ENCODE measurements at regions of chr14 and their contacts with region 1.

Region 1: DNA sequence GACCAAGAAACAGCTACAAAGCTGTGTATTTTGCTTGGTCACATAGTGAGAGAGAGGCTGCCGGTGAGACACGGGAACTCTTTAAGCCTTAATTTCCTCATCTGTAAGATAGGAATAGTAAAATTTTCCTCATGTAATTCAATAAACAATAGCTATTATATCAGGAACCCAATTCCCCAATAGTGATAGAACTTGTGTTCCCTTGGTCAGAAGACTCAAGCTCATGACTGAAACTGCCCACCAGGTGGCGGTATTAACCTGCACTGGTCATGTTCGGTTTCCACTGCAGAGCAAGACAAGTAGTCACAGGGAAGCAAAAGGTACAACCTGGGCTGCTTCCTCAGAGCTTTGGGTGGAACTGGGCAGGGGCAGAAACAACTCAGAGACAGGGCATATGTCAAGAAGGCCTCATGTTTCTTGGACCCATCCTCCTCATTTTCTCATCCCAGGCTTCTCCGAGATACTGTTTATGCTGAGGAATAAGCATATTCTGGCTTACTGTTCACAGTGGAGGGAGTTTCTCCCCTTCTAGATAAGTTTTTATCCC is 4.2 kb upstream of the AJUBA start:
- DNase-seq: peak; percentile 95
- ATAC-seq: peak; percentile 57
- H3K4me3 Mint-ChIP-seq: no peak overlapping the region
- H3K27ac Mint-ChIP-seq: no peak overlapping the region
- H3K4me1 Mint-ChIP-seq: peaks cover 5% of the 10 kb centered on the region
- H3K27me3 Mint-ChIP-seq: no peaks in the 10 kb centered on the region; the same call in 1 of the 2 replicates
- CTCF ChIP-seq: peak; percentile 83

Region 2: DNA sequence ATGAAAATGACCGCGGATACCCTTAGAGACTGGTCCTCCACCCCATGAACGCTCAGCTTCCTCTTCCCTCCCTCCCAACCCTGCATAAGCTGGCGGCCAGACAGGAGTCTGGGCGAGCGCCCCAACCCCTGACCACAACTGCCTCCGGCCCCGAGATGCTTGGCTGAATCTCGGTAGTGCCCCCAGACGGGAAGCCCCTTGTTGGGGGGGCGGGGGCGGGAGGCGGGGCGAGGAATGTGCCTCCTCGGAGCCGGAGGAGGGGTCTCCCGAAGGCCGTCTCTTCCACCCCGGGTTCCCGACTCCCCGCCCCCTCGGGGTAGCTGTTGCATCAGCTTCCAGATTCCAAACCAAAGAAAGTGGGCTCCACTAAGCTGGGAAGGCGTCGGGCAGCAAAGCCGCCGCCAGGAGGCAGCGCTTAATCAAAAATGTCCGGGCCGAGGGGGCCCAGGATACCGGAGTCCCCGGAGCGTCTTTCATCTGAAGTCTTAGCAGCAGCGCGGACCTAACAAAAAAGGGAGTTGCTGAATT is 163.9 kb before region 1 on chr14:
- CTCF ChIA-PET with region 1: interaction called, 13 read pairs
- POLR2A ChIA-PET with region 1: no interaction called
- DNase-seq: peak; percentile 97
- ATAC-seq: peak; percentile 79
- H3K4me3 Mint-ChIP-seq: peak overlapping the region; percentile 77
- H3K27ac Mint-ChIP-seq: peak overlapping the region; percentile 78
- H3K4me1 Mint-ChIP-seq: peaks cover 57% of the 10 kb centered on the region
- H3K27me3 Mint-ChIP-seq: peaks cover 6% of the 10 kb centered on the region
- CTCF ChIP-seq: peak; percentile 67

Region 3: DNA sequence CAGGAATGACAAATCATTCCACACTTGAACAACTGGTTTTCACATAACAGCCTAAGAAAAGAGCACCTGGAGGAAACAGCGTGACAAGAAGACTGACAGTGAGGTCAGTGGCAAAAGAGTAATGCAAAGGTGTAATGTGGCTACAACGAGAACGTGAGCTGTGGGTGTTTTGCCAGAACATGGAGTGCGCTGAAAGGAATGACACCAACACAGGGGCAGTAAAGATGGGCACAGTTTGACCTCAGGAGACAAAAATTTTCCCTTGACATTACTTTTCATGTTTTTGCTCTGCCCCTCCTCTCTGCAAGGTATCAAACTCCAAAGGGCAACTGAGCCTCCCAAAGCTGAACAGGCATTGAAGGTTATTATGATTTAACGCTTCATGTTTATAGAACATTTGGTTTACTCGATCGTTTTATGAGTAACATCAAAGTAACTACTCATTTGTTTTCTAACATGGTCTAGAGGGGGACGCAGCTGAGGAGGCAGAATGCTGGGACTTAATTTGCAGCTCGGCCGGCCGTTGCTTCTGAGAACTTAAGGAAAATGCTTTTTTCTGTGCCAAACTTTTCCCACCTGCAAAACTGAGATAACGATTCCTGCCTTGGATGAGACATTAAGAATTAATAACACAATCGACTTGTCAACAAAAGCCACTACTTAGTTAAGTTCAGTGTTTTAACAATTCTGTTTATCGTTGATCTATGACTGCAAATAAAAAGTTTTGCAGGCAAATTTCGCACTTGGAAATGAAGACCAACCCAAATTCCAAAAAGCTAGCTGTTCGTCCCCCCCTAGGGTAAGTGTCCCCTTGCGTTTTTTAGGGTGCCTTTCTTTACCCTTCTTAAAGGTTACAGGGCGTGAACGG is 30.6 kb before region 1 on chr14:
- CTCF ChIA-PET with region 1: interaction called, 28 read pairs
- POLR2A ChIA-PET with region 1: interaction called, 13 read pairs
- DNase-seq: no peak
- ATAC-seq: no peak
- H3K4me3 Mint-ChIP-seq: peak overlapping the region; percentile 91
- H3K27ac Mint-ChIP-seq: peak overlapping the region; percentile 94
- H3K4me1 Mint-ChIP-seq: peaks cover 20% of the 10 kb centered on the region
- H3K27me3 Mint-ChIP-seq: no peaks in the 10 kb centered on the region
- CTCF ChIP-seq: no peak

Region 4: DNA sequence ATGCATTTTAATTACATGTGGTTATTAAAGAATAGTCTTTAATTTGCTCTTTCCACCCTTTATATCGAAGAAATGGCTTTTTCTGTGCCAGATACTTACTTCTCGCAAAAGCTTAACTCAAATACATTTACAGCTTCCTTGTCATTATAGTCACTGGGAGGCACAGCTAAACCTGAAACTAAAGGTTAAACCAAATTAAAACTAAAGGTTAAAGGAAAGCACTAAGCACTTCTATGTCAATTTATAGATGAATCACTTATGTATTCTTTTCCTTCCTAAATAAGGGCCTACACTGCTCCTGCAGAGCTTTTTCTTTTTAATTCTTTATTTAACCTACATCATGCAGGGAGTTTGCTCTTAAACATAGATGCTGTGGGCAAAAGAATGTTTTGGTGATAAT is 14.3 kb after region 1 on chr14:
- CTCF ChIA-PET with region 1: interaction called, 159 read pairs
- POLR2A ChIA-PET with region 1: interaction called, 23 read pairs
- DNase-seq: no peak
- ATAC-seq: no peak
- H3K4me3 Mint-ChIP-seq: no peak overlapping the region
- H3K27ac Mint-ChIP-seq: no peak overlapping the region
- H3K4me1 Mint-ChIP-seq: peaks cover 2% of the 10 kb centered on the region
- H3K27me3 Mint-ChIP-seq: no peaks in the 10 kb centered on the region
- CTCF ChIP-seq: no peak

Region 5: GRCh38 chr14:23025151-23025814 is 38.7 kb after region 1 on chr14:
- CTCF ChIA-PET with region 1: interaction called, 18 read pairs
- POLR2A ChIA-PET with region 1: interaction called, 3 read pairs
- DNase-seq: no peak
- ATAC-seq: no peak
- H3K4me3 Mint-ChIP-seq: no peak overlapping the region
- H3K27ac Mint-ChIP-seq: peak overlapping the region; percentile 78
- H3K4me1 Mint-ChIP-seq: peaks cover 19% of the 10 kb centered on the region
- H3K27me3 Mint-ChIP-seq: no peaks in the 10 kb centered on the region
- CTCF ChIP-seq: no peak

Region 6: DNA sequence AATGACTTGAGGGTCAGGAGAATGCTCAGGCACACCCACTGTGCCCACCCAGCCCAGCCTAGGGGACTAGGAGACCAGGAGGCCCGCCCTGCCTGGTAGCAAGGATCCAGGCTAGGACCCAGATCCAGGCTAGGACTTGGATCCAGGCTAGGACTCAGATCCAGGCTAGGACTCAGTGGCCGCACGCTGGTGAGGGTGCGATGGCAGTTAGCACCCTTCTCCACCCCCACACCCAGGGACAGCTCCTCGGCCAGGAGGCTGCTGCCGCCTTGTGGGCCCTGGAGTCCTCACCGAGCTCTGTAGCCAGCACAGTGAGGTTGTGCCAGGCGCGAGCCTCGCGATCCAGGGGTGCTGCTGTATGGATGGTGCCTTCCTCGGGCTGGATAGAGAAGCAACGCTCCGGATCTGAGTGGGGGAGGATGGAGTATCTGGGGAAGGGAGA is 65.6 kb after region 1 on chr14:
- CTCF ChIA-PET with region 1: interaction called, 224 read pairs
- POLR2A ChIA-PET with region 1: interaction called, 5 read pairs
- DNase-seq: peak; percentile 68
- ATAC-seq: peak; percentile 55
- H3K4me3 Mint-ChIP-seq: no peak overlapping the region
- H3K27ac Mint-ChIP-seq: no peak overlapping the region
- H3K4me1 Mint-ChIP-seq: peaks cover 15% of the 10 kb centered on the region
- H3K27me3 Mint-ChIP-seq: peaks cover 5% of the 10 kb centered on the region; the same call in 1 of the 2 replicates
- CTCF ChIP-seq: no peak

Region 7: DNA sequence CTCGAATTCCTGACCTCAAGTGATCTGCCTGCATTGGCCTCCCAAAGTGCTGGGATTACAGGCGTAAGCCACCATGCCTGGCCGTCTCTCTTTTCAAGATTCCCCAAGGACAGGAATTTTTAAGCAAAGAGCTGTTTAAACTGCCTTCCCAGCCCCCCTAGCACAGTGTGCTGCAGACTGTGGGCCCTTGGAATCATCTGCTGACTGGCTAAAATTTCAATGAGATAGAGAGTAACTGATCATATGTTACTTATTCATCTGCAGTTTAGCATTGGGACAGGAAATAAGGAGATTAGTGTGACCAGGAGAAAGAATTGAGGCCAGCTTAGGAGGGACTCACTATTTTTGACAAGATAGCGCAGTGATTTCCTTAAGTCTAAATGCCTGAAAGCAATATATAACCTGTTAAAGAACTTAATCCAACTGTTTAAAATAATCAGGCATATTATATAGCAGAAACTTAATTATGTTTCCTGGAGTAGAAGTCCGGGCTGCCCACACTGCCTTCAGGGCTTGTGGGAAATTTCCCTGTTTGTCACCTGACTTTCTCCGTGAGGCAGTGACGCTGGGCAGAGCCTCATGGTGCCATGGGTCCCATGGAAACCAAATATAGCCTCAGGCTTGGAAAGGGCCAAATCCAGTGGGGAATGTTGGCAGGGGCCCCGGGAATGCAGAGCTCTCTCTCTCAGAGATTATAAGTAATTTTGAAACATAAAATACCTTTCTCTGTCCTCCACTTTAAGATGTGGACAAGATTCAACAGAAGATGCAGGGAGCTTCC is 155.3 kb after region 1 on chr14:
- CTCF ChIA-PET with region 1: no interaction called
- POLR2A ChIA-PET with region 1: no interaction called
- DNase-seq: no peak
- ATAC-seq: no peak
- H3K4me3 Mint-ChIP-seq: no peak overlapping the region
- H3K27ac Mint-ChIP-seq: peak overlapping the region; percentile 52; the same call in 1 of the 2 replicates
- H3K4me1 Mint-ChIP-seq: peaks cover 6% of the 10 kb centered on the region
- H3K27me3 Mint-ChIP-seq: no peaks in the 10 kb centered on the region
- CTCF ChIP-seq: no peak

Measured in WTC11 (cell line).